Endothelial cell of umbilical vein (primary cell): ENCODE measurements at regions of chr5 and their contacts with region 1.

Region 1: GRCh38 chr5:78294248-78295034 is at the start of gene AP3B1:
- DNase-seq: peak; percentile 99
- H3K4me3 ChIP-seq: peak within 1 kb of the TSS; percentile 61 to 99 (median 97)
- H3K27ac ChIP-seq: peak within 1 kb of the TSS; percentile 88
- H3K4me1 ChIP-seq: peaks cover 14% of the 10 kb centered on the region
- H3K27me3 ChIP-seq: no peaks in the 10 kb centered on the region
- CTCF ChIP-seq: no peak
- POLR2A ChIP-seq: peak; percentile 95
- total RNA-seq, gene AP3B1: 46.5 and 46.7 TPM in 2 replicates

Region 2: DNA sequence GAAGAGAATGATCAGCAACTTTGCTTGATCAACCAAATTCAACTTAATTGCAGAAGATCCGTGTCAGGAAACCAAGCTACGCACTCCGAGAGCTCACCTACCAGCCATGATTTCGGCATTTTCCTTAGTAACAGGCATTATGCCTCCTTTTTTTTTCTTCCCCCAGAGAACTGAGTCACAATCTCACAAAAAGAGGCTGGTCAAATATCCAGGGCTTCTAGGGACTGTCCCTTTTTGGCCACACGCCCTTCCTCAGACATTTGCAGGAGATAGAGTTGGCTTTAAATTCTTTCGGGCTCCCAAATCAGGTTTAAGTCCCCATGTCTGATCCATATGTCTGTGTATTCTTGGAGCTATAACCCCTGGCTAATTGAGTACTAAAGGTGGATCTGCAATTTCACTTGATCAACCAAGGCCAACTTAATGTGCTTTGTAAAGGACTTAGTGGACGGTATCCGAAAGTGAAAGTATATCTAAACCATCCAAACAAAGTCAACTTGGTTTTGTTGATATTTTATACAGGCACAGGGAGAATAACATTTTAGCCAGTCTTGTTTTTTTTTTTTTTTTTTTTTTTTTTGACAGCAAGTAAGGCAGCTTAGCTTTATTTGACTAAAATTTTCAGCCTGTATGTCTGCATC is 417.5 kb before region 1 on chr5:
- CTCF ChIA-PET with region 1: no interaction called
- POLR2A ChIA-PET with region 1: no interaction called
- dilution Hi-C with region 1: no loop called
- intact Hi-C with region 1: loop called (anchors 10 kb)
- DNase-seq: no peak
- H3K4me3 ChIP-seq: no peak overlapping the region
- H3K27ac ChIP-seq: no peak overlapping the region
- H3K4me1 ChIP-seq: peaks cover 6% of the 10 kb centered on the region
- H3K27me3 ChIP-seq: peaks cover 0 to 5% of the 10 kb centered on the region in 2 experiments
- CTCF ChIP-seq: no peak
- POLR2A ChIP-seq: no peak

Region 3: DNA sequence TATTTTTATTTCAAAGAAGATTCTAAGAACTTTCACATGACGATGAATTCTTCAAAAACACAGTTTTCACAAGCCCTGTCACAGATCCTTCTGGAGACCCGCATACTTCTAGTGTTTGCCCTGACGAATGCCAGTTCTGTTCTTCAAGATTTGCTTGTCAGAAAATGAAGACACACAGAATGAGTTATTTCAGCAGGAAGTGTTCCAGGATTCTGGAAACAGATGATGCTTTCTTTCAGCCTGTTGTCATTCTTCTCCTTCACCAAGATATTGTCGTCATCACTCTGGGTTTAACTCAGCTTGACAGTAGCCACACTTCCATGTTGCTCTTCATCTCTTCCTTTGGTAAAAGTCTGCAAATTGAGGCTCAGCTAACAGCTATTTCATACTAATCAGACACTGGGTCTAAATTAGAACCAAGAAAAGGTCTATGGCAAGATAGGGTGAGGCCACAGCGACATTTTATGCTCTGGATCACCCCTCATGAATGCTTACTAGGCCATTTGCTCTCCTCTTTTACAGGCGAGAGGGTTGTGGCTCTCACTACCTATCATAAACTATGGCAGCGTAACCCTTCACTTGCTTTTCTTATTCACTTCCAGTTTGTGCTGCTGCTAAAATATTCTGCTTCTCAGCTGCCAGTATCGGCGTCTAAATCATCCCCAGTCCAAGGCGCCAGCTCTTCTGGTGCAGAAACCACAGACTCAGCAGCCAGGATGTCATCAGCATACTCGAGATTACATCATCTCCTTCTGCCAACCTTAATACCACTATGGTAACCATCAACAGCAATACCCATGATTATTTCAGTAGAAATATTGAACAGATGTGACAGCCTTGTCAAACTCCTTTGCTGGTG is 358.7 kb before region 1 on chr5:
- CTCF ChIA-PET with region 1: no interaction called
- POLR2A ChIA-PET with region 1: no interaction called
- dilution Hi-C with region 1: no loop called
- intact Hi-C with region 1: no loop called
- DNase-seq: no peak
- H3K4me3 ChIP-seq: no peak overlapping the region
- H3K27ac ChIP-seq: no peak overlapping the region
- H3K4me1 ChIP-seq: no peaks in the 10 kb centered on the region
- H3K27me3 ChIP-seq: peaks cover 12 to 27% of the 10 kb centered on the region in 2 experiments
- CTCF ChIP-seq: no peak
- POLR2A ChIP-seq: no peak

Region 4: DNA sequence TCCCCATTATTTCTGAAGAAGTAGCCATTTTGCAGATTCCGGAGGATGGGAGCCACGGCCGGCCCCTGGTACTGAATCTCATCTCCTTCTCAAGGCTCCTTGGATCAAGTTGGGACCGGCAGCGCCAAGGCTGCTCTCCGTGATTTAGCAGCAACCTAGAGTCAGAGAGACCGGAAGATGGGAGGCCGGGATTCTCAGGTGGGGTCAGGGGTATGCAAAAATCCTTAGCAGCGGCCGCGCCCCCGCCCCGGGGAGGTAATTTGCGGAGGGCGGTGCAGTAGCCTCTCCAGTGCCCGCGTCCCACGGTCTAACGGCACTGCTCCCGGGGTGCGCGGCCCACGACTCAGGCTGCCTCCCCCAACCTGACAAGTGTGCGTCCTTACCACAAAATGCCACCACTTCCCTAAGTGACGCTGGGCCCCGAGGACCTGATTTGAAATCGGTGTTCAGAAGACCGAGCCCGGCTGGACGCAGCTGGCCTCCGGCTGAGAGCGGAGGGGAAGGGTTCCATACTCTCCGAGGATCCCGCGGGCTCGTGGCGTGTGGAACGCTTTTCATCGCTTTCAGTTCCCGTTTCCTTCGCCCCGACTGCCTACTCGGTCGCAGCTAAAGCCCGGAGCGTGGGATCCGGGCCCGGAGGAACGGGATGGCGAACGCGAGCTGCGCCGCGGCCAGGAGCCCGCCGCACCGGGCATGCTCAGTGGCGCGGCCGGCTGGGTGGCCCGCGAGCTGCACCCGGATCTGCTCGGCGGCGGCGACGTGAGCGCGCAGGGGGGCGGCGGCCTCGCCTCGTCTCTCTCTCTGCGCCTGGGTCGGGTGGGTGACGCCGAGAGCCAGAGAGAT is 65.6 kb after region 1 on chr5 and contains the start of gene SCAMP1:
- CTCF ChIA-PET with region 1: interaction called, 7 read pairs
- POLR2A ChIA-PET with region 1: interaction called, 8 read pairs
- dilution Hi-C with region 1: no loop called
- intact Hi-C with region 1: loop called (anchors 1 kb)
- DNase-seq: peak; percentile 95
- H3K4me3 ChIP-seq: peak within 1 kb of the TSS; percentile 72 to 95 (median 75)
- H3K27ac ChIP-seq: peak within 1 kb of the TSS; percentile 65
- H3K4me1 ChIP-seq: peaks cover 14% of the 10 kb centered on the region
- H3K27me3 ChIP-seq: no peaks in the 10 kb centered on the region
- CTCF ChIP-seq: peak; percentile 10 to 28
- POLR2A ChIP-seq: peak; percentile 73
- total RNA-seq, gene SCAMP1: 29.0 and 30.7 TPM in 2 replicates

Region 5: GRCh38 chr5:78527054-78527859 is 232.8 kb after region 1 on chr5:
- CTCF ChIA-PET with region 1: no interaction called
- POLR2A ChIA-PET with region 1: no interaction called
- dilution Hi-C with region 1: no loop called
- intact Hi-C with region 1: no loop called
- DNase-seq: peak; percentile 99
- H3K4me3 ChIP-seq: peak overlapping the region in 1 of 3 experiments; percentile 1
- H3K27ac ChIP-seq: peak overlapping the region; percentile 99
- H3K4me1 ChIP-seq: peaks cover 84% of the 10 kb centered on the region
- H3K27me3 ChIP-seq: no peaks in the 10 kb centered on the region
- CTCF ChIP-seq: no peak
- POLR2A ChIP-seq: no peak